ENCODE measurements at regions of chr6 and their contacts with region 1.

Region 1: DNA sequence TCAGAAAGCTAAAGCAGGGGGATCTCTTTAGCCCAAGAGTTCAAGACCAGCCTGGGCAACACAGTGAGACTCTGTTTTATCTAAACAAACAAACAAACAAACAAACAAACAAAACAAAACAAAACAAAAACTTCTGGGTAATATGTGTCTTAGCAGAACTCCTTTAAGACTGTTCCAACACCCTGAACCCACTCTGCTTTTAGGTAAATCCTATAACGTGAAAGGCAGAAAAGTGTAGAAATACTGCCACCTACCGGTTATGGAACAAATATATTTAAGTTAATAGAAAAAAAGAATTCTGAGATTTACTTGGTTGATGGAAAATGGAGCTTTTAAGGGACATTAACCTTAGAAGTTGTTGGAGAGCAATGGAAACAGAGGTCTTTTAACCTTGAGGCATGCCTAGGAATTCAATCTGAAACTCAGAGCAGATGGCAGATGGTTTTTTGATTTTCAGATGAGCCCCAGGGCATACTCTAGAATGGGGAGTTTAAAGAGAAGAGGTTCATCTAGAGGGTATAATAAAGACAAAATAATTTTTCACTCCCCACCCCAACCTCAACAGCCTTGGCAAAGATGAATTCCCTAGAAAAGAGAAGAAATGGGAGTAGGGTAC is 38.5 kb downstream of the SOD2 start:
- DNase-seq: peak; percentile 9
- H3K4me3 ChIP-seq: no peak overlapping the region
- H3K27me3 ChIP-seq: no peaks in the 10 kb centered on the region
- CTCF ChIP-seq: peak; percentile 45

Region 2: GRCh38 chr6:159212028-159212427 is 442.6 kb before region 1 on chr6:
- CTCF ChIA-PET with region 1: interaction called, 14 read pairs
- POLR2A ChIA-PET with region 1: no interaction called
- DNase-seq: no peak
- H3K4me3 ChIP-seq: no peak overlapping the region
- H3K27me3 ChIP-seq: no peaks in the 10 kb centered on the region
- CTCF ChIP-seq: no peak

Region 3: DNA sequence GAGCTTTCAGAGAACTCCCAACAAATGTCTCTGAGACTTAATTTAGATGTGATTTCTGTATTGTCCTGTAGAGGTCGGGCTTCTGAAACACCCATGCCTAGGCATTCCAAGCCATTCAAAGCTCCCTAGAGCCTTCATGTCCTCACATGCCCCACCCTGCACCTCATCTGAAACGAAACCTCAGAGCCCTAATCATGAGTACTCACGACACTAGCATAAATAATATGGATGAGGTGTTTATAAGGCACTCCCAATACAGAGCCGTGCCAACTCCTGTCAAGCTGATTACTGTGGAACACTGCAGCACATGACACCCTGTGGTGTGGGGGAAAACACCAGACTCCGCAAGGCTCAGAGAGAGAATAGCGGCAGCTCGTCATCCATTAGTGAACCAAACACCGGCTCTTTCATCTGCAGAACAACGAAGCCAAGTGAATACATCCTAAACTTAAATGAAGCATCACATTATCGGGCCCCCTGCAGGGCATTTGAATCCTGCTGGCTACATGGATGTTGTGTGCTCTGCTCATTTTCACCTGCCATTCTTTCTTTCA is 401.6 kb before region 1 on chr6:
- CTCF ChIA-PET with region 1: interaction called, 18 read pairs
- POLR2A ChIA-PET with region 1: no interaction called
- DNase-seq: no peak
- H3K4me3 ChIP-seq: no peak overlapping the region
- H3K27me3 ChIP-seq: no peaks in the 10 kb centered on the region
- CTCF ChIP-seq: peak; percentile 66

Region 4: DNA sequence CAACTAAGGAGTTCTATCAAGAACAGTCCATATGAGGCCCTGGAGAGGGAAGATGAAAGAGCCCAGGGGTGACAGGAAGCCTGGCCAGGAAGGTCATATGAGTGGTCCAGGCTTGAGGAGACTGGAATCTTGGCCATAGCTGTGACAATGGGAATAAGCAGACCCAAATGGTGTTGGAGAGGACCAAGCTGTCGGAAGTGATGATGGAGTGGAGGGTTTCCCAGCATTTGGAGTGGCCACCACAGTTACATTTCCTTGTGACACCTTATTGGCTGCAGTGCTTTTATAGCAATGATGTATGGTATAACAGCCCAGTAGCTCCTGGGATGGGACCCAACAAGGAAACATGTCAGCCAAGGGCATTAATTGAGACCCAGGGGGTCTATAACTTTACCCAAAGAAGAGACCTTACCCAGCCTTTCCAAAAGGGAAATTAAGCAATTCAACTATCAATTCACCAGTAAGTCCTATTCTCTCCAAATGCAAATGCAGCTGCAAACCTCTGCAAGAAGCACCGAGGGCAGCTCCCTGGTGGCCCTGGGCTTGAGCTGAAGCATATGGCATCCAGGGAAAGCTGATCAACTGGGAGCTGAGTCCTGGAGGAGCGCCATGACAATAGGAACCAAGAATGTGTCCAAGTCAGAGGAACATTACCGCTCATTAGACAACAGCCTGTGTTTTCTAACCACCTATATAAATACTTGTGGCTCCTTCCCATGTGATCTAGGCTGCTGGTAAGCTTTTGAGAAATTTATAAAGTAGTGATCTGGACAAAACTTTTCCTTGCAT is 180.9 kb before region 1 on chr6:
- CTCF ChIA-PET with region 1: no interaction called
- POLR2A ChIA-PET with region 1: no interaction called
- DNase-seq: no peak
- H3K4me3 ChIP-seq: no peak overlapping the region
- H3K27me3 ChIP-seq: no peaks in the 10 kb centered on the region
- CTCF ChIP-seq: no peak

Region 5: DNA sequence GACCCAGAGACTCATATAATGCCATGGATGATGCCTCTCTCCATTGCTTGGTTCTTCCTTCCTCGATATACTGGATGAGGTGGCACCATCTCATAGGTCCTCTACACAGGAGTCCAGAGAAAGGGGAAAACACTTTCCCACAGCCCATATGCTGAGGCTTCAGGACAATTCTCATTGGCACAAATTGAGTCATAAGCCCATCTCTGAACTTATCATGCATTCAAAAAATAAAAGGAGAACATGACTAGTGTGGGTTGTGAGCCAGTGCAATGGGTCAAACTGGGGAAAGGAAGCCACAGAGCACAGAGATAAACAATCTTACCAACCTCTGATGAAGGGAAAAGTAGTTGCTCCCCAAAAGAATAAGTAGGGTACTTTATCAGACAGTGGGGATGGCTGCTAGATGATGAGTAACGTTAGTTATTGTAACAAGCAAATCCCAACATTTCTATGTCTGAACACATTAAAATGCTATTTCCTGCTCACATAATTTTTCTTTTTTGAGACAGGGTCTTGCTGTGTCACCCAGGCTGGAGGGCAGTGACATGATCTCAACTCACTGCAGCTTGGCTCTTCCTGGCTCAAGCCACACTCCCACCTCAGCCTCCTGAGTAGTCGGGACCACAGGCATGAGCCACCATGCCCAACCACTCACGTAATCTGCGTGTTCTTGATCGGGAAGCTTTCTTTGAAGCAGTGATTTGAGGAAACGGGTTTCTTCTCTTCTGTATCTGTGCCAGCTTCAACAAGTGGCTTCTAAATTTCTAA is 11.5 kb after region 1 on chr6:
- CTCF ChIA-PET with region 1: interaction called, 11 read pairs
- POLR2A ChIA-PET with region 1: no interaction called
- DNase-seq: no peak
- H3K4me3 ChIP-seq: no peak overlapping the region
- H3K27me3 ChIP-seq: no peaks in the 10 kb centered on the region
- CTCF ChIP-seq: no peak

Region 6: DNA sequence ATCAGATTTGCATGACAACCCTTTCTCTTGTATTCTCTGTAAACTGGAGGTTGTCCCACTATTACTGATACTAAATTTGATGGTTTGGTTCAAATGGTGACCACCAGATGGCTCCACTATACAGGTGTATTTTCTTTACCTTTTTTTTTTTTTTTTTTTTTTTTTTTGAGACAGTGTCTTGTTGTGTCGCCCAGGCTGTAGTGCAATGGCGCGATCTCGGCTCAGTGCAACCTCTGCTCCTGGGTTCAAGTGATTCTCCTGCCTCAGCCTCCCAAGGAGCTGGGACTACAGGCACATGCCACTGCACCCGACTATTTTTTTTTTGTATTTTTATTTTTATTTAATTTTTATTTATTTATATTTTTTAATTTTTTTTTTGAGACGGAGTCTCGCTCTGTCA is 66.1 kb after region 1 on chr6:
- CTCF ChIA-PET with region 1: no interaction called
- POLR2A ChIA-PET with region 1: no interaction called
- DNase-seq: no peak
- H3K4me3 ChIP-seq: no peak overlapping the region
- H3K27me3 ChIP-seq: no peaks in the 10 kb centered on the region
- CTCF ChIP-seq: peak; percentile 41; the same call in 1 of the 2 replicates

Region 7: DNA sequence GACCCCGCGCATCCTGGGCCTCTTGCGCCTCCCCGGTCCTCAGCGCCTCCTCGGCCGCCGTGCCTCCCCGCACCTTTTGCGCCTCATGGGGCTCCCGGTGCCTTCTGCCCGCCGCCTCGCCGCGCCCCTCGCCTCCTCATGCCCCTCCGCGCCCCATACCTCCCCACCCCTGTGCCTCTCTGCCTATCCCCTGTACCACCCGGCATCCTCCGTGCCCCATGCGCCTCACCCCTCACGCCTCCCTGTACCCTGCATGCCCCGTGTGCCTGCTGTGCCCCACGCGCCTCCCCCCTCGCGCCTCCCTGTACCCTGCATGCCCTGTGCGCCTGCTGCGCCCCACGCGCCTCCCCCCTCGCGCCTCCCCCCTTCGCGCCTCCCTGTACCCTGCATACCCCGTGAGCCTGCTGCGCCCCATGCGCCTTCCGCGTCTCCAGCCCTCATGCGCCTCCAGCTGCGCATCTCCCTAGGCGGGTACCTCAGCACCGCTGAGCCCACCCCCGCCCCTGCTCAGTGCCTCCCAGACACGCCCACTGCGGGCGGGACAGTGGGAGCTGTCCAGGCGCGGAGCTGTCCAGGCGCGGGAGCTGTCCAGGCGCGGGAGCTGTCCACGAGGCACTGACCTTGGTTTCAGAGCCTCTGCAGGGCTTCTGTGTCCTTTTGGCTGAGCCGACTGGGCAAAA is 351.4 kb after region 1 on chr6:
- CTCF ChIA-PET with region 1: no interaction called
- POLR2A ChIA-PET with region 1: no interaction called
- DNase-seq: no peak
- H3K4me3 ChIP-seq: peak overlapping the region; percentile 13
- H3K27me3 ChIP-seq: no peaks in the 10 kb centered on the region
- CTCF ChIP-seq: no peak

Measured in BJ (cell line).